ENCODE measurements at regions of chr16 and their contacts with region 1.

Region 1: DNA sequence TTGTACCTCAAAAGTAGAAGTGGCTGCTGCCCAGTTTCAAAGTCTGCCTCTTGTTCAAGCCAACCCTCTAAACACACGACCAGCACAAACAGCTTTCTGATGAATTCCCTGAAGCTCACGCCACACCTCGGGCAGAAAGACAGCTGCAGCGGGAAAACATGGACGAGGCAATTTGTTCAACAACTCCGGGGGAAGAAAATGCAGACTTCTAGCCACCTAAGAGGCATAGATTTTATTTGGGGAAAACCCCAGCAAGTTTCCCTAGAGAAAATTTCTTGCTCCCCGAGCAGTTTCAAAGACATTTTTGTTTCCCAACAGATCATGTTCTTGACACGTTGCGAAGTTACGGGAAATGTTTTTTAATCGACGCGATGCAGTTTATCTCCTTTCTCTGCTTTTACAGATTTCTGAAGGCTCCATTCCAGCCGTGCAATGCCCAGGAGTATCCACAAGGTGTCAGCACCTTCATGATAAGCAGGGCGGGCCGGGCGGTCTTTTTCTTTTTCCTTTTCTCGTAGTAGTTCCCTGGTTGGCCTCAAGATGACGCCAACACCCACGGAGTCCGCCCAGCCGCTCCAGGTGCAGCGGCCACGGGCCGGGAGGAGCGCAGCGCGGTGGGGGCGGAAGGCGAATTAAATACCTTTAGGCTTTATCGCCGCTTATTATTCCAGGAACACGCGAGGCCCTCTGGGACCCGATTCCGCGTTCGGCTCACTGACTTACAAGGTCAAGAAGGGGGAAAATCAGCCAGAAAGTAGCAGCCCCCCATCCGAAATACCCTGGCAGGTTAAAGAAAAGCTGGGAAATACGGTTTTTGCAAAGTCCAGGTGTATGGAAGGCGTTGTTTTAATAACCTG is 2.9 kb upstream of the FOXC2 start:
- DNase-seq: peak; percentile 90
- ATAC-seq: peak; percentile 85
- H3K4me3 ChIP-seq: peak overlapping the region; percentile 65
- H3K27ac ChIP-seq: peak overlapping the region; percentile 54
- H3K4me1 ChIP-seq: peaks cover 15% of the 10 kb centered on the region
- H3K27me3 ChIP-seq: no peaks in the 10 kb centered on the region
- CTCF ChIP-seq: peak; percentile 96

Region 2: GRCh38 chr16:86718118-86718517 is 154.4 kb after region 1 on chr16:
- CTCF ChIA-PET with region 1: no interaction called
- POLR2A ChIA-PET with region 1: no interaction called
- intact Hi-C with region 1: no loop called
- DNase-seq: peak; percentile 44
- ATAC-seq: peak; percentile 38; the same call in 1 of the 2 replicates
- H3K4me3 ChIP-seq: no peak overlapping the region
- H3K27ac ChIP-seq: no peak overlapping the region
- H3K4me1 ChIP-seq: peaks cover 6% of the 10 kb centered on the region; the same call in 1 of the 2 replicates
- H3K27me3 ChIP-seq: no peaks in the 10 kb centered on the region
- CTCF ChIP-seq: no peak

Region 3: DNA sequence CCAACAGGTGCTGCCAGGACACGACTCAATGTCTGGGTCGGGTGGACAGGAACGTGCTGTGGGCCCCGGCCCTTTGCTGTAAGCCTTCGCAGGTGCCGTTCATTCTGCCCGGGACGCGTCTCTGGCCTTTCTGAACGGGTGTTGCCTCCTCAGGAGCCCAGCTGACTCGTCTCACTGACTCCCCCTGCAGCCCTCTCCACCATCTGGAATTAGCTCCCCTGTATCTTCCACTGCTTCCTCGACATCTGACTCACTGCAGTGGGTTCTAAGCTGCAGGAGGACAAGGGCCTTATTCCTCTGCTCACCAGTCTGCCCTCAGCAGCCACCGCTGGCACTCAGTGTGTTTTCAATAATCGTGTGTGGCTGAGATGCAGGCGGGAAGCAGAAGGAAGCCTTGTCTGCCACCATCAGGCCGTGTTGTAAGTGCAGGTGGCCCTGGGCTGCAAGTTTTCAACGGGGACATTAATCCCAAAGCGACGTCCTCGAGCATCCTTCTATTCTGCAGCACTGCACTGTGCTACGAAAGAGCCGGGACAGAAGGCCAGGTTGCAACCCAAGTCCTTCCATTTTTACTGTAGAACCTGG is 270.8 kb after region 1 on chr16:
- CTCF ChIA-PET with region 1: no interaction called
- POLR2A ChIA-PET with region 1: no interaction called
- intact Hi-C with region 1: loop called (anchors 1 kb)
- DNase-seq: peak; percentile 7
- ATAC-seq: peak; percentile 54
- H3K4me3 ChIP-seq: no peak overlapping the region
- H3K27ac ChIP-seq: no peak overlapping the region
- H3K4me1 ChIP-seq: 0 out of 2 replicates have a peak, but pooled peaks cover 4% of the 10 kb centered on the region
- H3K27me3 ChIP-seq: no peaks in the 10 kb centered on the region
- CTCF ChIP-seq: peak; percentile 37; the same call in 1 of the 2 replicates

Region 4: DNA sequence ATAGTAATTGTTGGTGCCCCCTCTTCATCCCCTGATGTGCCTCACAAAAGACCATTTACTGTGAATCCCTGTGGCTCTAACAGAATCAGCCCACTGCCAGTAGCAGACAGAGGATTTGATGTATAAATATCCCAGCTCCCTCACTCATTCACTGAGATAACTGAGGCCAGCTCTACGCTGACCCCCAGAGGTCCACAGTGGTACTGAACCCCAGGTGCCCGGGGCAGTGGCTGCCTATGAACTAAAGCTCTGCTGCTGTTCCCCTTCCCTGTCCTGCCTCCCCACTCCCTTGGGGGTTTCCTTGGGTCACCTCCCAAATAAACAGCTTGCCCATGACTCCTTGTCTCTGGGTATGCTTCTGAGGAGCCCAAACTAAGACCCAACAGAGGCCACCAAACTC is 310.4 kb after region 1 on chr16:
- CTCF ChIA-PET with region 1: no interaction called
- POLR2A ChIA-PET with region 1: no interaction called
- intact Hi-C with region 1: loop called (anchors 1 kb)
- DNase-seq: peak; percentile 53
- ATAC-seq: peak; percentile 64
- H3K4me3 ChIP-seq: no peak overlapping the region
- H3K27ac ChIP-seq: no peak overlapping the region
- H3K4me1 ChIP-seq: no peaks in the 10 kb centered on the region
- H3K27me3 ChIP-seq: no peaks in the 10 kb centered on the region
- CTCF ChIP-seq: peak; percentile 60

Region 5: GRCh38 chr16:87017365-87018012 is 453.8 kb after region 1 on chr16:
- CTCF ChIA-PET with region 1: interaction called, 4 read pairs
- POLR2A ChIA-PET with region 1: interaction called, 3 read pairs
- intact Hi-C with region 1: loop called (anchors 5 kb)
- DNase-seq: peak; percentile 80
- ATAC-seq: peak; percentile 98
- H3K4me3 ChIP-seq: no peak overlapping the region
- H3K27ac ChIP-seq: no peak overlapping the region
- H3K4me1 ChIP-seq: peaks cover 9% of the 10 kb centered on the region
- H3K27me3 ChIP-seq: 0 out of 2 replicates have a peak, but pooled peaks cover 5% of the 10 kb centered on the region
- CTCF ChIP-seq: peak; percentile 63

Region 6: GRCh38 chr16:87062569-87063442 is 499.1 kb after region 1 on chr16:
- CTCF ChIA-PET with region 1: interaction called, 22 read pairs
- POLR2A ChIA-PET with region 1: no interaction called
- intact Hi-C with region 1: loop called (anchors 1 kb)
- DNase-seq: peak; percentile 73
- ATAC-seq: peak; percentile 92
- H3K4me3 ChIP-seq: peak overlapping the region; percentile 55
- H3K27ac ChIP-seq: no peak overlapping the region
- H3K4me1 ChIP-seq: peaks cover 7% of the 10 kb centered on the region; the same call in 1 of the 2 replicates
- H3K27me3 ChIP-seq: no peaks in the 10 kb centered on the region
- CTCF ChIP-seq: peak; percentile 86

Region 7: DNA sequence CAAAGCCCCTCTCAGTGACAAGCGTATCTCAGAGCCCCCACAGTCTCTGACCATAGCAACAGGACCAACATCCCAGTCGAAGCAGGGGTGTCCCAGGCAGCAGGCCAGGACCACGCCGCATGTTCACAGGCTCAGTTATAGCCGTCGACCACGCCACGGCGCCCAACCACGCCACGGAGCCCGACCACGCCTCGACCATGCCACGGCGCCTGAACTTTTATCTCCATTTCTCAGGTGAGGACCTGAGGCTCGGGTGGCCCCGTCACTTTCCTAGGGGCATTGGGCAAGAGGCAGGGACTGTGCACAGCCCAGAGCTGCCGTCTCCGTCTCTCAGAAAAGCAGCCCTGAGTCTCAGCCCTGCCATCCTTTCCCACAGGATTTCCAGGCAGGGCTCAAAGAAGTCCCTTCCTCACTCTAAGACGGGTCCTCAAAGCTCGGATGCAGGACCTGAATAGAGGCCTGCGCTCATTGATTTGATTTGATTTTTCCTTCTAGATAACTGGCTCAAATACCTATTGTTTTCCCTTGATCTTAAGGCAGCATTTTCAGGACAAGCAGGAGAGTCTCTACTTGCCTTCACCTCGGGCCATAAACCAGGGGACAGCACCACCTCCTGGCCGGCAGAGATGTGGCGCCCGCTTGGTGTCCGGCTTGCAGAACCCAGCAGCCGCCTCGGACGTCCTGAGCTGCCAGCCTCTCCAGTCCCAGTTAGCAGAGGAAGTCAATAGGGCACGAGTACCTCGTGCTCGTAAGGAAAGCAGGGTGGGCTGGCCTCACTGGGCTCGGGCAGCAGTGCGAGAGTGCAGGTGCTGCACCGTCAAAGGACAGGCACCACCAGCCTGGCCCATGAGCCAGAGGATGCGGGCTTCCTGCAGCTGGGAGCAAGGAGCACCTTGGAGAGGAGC is 714.7 kb after region 1 on chr16:
- CTCF ChIA-PET with region 1: interaction called, 4 read pairs
- POLR2A ChIA-PET with region 1: no interaction called
- intact Hi-C with region 1: loop called (anchors 1 kb)
- DNase-seq: peak; percentile 69
- ATAC-seq: peak; percentile 99
- H3K4me3 ChIP-seq: no peak overlapping the region
- H3K27ac ChIP-seq: no peak overlapping the region
- H3K4me1 ChIP-seq: no peaks in the 10 kb centered on the region
- H3K27me3 ChIP-seq: no peaks in the 10 kb centered on the region
- CTCF ChIP-seq: peak; percentile 88